HEK293T (cell line): ENCODE measurements at regions of chr10 and their contacts with region 1.

Region 1: DNA sequence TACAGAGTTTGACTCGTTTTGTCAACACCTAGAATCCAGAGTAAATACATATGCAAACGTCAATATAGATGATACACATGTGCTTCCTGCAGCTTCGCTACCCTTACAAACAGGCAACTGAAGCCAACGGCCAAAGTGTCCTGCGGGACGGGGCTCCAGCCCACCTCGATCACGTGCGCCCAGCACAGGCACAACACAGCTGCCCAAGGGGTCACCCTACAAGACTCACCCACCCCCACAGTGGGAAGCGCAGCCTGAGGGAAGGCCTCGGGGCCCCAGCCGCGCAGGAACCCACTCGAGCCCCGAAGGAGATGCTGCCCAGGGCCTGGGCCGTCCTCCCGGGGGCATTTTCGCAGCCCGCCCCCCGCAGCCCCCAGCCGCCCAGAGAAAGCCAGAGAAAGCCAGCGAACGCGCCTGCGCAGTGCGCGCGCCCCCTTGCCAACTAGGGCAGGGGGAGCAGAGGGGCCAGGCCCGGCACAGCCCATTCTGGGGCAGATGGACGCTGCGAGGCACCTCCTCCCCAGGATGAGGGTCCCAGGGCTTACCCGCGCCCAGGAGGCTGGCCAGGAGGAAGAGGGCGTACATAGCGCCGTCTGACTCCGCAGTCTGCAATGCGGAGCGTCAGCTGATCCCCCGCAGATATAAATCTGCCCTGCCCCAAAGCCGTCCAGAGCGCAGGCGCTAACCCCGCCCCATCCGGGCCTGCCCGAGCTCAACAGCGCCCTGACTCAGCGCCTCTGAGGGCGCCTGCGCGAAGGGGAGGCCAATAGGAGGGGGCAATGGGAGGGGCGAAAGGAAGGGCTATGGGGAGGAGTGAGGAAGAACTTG is at the start of gene PSAP:
- DNase-seq: peak; percentile 100

Region 2: DNA sequence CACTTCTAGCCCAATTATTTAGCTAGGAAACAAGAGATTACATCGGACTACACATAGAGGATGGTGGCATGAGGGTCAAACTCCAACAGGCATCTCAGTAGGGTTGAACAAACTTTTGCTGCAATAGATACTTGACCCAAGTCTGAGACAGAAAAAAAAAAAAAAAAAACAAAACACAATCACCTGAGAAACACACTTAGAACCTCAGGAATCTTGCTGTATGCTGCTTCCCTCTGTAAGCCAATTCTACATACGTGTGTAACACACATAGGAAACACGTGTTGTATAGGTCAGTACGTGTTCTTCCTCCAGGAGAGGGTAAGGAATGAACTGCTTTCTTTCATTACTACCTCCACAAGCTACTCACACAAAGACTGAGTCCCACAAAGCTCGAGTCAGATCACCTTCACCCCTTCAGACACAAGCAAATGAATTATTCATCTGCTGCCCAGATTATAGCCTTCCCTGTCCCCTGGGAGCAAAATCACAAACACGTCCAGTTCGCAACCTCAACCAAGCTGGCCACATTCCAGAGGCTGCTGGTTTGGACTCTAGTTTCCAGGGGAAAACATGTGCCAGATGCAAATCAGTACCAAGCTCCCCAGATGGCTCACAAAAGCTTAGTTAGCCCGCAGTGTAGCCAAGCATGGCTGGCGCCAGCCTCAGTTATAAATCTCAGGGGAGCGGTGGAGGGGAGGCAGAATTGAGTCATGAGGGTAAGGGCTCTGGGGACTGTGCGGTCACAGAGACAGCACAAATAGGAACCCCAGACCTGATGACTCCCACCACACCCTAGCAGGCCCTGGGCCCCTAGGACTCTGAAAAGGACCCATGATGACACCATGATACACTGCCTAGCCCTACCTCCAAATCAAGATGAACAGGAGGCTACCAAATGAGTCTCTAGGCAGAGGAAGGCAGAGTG is 14.9 kb before region 1 on chr10:
- CTCF ChIA-PET with region 1: interaction called, 4 read pairs
- POLR2A ChIA-PET with region 1: interaction called, 62 read pairs
- DNase-seq: no peak

Region 3: DNA sequence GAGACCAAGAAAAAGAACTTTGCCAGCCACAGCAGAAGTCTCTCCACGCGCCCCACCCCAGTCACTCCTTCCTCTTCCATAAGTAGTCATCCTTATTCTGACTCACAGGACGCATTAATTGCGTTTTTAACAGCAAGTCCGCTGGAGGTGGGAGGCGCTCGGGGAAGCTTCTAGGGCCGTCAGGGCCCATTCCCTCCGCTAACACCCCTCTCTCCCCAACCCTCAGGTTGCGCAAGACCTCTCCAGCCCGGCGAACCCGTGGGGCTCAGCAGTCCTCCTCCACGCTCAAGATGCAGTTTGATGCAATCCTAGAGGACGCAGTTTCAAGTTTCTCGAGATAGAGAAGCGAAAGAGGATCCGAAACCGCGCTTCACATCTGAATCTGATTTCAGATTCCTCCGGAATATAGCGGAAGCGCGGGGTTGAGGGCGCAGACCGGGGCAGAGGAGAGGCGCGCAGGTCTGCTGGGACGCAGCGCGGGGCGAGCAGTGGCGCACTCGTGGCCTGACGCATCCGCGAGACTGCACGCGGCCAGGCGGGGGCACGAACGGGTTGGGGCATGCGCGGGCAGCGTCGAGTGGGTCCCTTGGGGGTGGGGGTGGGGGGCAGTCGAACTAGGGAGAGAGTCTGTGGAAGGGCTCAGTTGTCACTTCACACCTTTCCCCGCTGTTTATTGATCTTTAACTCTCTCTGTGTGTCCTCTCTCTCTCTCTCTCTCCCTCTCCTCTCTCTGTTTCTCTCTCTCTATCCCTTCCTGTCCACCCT is 38.0 kb after region 1 on chr10:
- CTCF ChIA-PET with region 1: no interaction called
- POLR2A ChIA-PET with region 1: interaction called, 13 read pairs
- DNase-seq: peak; percentile 73

Region 4: GRCh38 chr10:71893920-71894319 is 43.1 kb after region 1 on chr10:
- CTCF ChIA-PET with region 1: no interaction called
- POLR2A ChIA-PET with region 1: interaction called, 13 read pairs
- DNase-seq: no peak